A673 (cell line): ENCODE measurements at regions of chr11 and their contacts with region 1.

Region 1: DNA sequence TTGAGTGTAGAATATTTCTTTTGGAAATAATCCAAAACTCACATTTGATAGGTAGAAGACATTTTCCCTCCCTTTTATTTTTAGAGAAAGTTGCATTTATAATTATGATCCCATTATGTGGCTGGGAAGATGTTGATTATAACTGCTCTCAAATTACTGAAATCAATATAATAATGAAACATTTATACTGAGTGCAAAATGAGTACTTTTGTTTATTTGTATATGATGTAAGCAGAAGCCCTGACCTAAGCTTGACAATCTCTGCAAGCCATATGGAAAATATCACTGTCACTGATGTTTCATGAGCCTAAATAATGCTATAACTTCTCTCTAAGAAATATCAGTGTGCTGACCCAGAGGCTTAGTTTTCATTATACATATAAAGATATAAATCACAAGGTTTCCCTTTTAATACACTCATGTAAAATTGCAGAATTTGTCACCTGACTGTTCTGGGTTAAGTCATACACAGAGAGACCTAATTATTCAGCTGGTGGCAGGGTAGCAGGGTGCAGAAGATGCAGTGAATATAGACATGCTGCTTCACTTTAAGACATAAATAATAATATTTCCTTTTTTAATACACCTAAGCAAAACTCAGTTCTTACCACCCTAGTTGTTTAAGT is 99.2 kb downstream of the BBOX1 start:
- DNase-seq: no peak
- H3K4me3 ChIP-seq: no peak overlapping the region
- H3K27ac ChIP-seq: no peak overlapping the region
- H3K4me1 ChIP-seq: no peaks in the 10 kb centered on the region
- H3K27me3 ChIP-seq: peaks cover 23% of the 10 kb centered on the region
- CTCF ChIP-seq: no peak

Region 2: DNA sequence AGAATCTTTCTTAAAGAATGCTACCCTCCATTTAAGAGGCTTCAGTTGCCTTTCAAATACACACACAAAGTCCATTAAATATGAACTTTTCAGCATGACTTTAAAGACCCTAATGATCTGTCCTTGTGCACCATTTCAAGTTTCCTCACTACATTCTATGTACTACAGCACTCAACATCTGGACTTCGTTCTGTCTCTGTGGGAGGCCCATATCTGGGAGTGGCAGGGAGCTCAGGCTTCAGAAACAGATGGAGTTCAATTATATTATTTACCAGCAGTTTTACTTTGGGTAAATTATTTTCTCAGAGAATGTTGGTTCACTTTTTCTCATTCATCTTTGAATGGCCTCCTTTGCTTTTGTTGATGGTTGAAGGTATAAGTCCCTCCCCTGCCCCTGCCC is 740.5 kb before region 1 on chr11:
- CTCF ChIA-PET with region 1: no interaction called
- POLR2A ChIA-PET with region 1: no interaction called
- intact Hi-C with region 1: loop called (anchors 5 kb)
- DNase-seq: peak; percentile 1
- H3K4me3 ChIP-seq: no peak overlapping the region
- H3K27ac ChIP-seq: no peak overlapping the region
- H3K4me1 ChIP-seq: no peaks in the 10 kb centered on the region
- H3K27me3 ChIP-seq: peaks cover 6% of the 10 kb centered on the region
- CTCF ChIP-seq: no peak

Region 3: DNA sequence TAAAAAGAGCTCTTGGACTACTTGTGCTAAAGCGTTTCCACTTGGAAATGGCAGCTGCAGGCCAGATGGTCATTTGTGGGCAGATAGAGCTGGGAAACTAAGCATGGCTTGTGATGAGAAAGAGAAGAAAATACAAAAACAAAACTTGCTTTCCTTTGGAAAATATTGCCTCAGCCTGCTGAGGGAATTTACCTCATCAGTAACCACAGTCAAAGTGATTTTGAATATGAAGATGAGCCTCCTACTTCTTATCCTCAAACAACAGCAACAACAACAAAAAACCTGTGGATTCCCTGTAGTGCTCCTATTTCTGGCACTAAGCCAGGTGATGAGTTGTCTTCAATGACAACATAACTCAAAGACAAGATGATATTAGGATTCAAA is 208.6 kb before region 1 on chr11:
- CTCF ChIA-PET with region 1: no interaction called
- POLR2A ChIA-PET with region 1: no interaction called
- intact Hi-C with region 1: no loop called
- DNase-seq: peak; percentile 25
- H3K4me3 ChIP-seq: no peak overlapping the region
- H3K27ac ChIP-seq: no peak overlapping the region
- H3K4me1 ChIP-seq: no peaks in the 10 kb centered on the region
- H3K27me3 ChIP-seq: peaks cover 86% of the 10 kb centered on the region
- CTCF ChIP-seq: no peak